ENCODE measurements at regions of chr5 and their contacts with region 1.

Region 1: GRCh38 chr5:108260117-108260857 is 121.6 kb downstream of the FBXL17 start:
- DNase-seq: peak; percentile 83
- H3K4me3 Mint-ChIP-seq: no peak overlapping the region
- H3K27ac Mint-ChIP-seq: no peak overlapping the region
- H3K4me1 Mint-ChIP-seq: no peaks in the 10 kb centered on the region
- H3K27me3 Mint-ChIP-seq: no peaks in the 10 kb centered on the region
- CTCF ChIP-seq: peak; percentile 86

Region 2: GRCh38 chr5:108122702-108123101 is 137.6 kb before region 1 on chr5:
- CTCF ChIA-PET with region 1: no interaction called
- POLR2A ChIA-PET with region 1: no interaction called
- intact Hi-C with region 1: no loop called
- DNase-seq: no peak
- H3K4me3 Mint-ChIP-seq: no peak overlapping the region
- H3K27ac Mint-ChIP-seq: no peak overlapping the region
- H3K4me1 Mint-ChIP-seq: no peaks in the 10 kb centered on the region
- H3K27me3 Mint-ChIP-seq: no peaks in the 10 kb centered on the region
- CTCF ChIP-seq: no peak

Region 3: DNA sequence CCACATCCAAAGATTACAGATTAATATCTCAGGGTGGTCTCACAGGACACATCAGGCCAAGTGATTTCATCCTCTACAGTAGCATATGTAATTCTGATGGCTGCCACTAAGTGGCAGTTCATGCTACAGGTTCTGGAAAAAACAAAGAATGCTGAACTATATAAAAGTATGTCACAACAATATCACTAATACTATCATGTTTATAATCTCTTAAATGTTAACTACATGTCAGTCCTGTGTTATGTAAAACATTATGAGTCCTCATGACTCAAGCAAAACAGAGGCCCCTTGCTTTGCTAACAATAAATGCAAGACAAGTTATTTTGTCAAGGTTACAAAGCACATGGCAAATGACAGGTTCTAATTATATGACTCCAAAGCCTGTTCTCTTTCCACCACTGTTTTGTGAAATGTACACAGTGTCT is 111.6 kb before region 1 on chr5:
- CTCF ChIA-PET with region 1: interaction called, 11 read pairs
- POLR2A ChIA-PET with region 1: no interaction called
- intact Hi-C with region 1: loop called (anchors 2 kb)
- DNase-seq: peak; percentile 32
- H3K4me3 Mint-ChIP-seq: no peak overlapping the region
- H3K27ac Mint-ChIP-seq: no peak overlapping the region
- H3K4me1 Mint-ChIP-seq: no peaks in the 10 kb centered on the region
- H3K27me3 Mint-ChIP-seq: no peaks in the 10 kb centered on the region
- CTCF ChIP-seq: peak; percentile 45

Region 4: GRCh38 chr5:108271127-108271526 is 10.8 kb after region 1 on chr5:
- CTCF ChIA-PET with region 1: interaction called, 22 read pairs
- POLR2A ChIA-PET with region 1: interaction called, 4 read pairs
- intact Hi-C with region 1: no loop called
- DNase-seq: no peak
- H3K4me3 Mint-ChIP-seq: no peak overlapping the region
- H3K27ac Mint-ChIP-seq: no peak overlapping the region
- H3K4me1 Mint-ChIP-seq: no peaks in the 10 kb centered on the region
- H3K27me3 Mint-ChIP-seq: no peaks in the 10 kb centered on the region
- CTCF ChIP-seq: no peak

Region 5: DNA sequence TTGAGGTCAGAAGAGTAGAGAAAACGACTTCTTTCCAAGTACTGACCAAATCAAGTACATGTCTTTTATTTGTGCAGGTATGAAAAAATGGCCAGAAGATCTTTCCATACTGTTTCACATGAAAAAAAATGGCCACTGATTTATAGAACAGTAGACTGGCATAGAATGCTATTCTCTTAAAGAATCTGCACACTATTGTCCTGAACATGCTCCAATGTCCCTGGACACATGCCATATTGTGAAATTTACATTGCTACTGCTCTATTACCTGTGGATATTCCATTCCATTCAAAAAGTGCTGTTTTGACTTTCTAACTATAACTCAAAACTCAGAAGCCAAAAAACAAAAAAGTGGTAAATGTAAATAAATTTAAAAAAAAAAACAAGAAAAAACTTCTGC is 61.1 kb after region 1 on chr5:
- CTCF ChIA-PET with region 1: interaction called, 22 read pairs
- POLR2A ChIA-PET with region 1: interaction called, 3 read pairs
- intact Hi-C with region 1: no loop called
- DNase-seq: peak; percentile 58
- H3K4me3 Mint-ChIP-seq: no peak overlapping the region
- H3K27ac Mint-ChIP-seq: no peak overlapping the region
- H3K4me1 Mint-ChIP-seq: peaks cover 6% of the 10 kb centered on the region
- H3K27me3 Mint-ChIP-seq: no peaks in the 10 kb centered on the region
- CTCF ChIP-seq: no peak

Region 6: DNA sequence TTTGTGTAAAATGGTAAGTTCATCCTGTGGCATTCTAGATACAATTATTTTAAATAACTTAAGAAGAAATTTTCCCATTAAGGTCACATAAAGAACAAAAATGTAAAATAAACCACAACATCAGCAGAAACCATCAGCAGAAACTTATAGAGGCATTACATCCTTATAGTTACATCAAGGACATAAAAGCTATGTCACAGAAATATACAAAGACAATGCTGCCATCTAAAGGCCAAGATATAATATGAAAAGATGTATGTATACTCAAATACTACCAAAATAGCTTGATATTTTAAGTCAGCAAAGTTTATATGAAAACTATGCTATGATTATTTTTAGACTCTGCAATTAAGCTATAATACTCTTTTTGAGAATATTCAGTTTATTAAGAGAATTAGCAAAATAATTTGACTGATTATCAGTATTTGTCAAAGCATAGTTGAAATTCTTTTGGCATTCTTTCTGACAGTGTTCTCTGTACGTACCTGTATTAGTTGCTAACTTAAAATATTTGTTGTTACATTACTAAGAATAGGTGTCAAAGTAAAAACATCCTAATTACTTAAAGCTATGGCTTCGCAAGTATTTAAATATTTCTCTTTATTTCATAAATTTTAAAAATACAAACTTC is 85.4 kb after region 1 on chr5:
- CTCF ChIA-PET with region 1: interaction called, 99 read pairs
- POLR2A ChIA-PET with region 1: interaction called, 4 read pairs
- intact Hi-C with region 1: loop called (anchors 1 kb)
- DNase-seq: peak; percentile 59
- H3K4me3 Mint-ChIP-seq: no peak overlapping the region
- H3K27ac Mint-ChIP-seq: no peak overlapping the region
- H3K4me1 Mint-ChIP-seq: no peaks in the 10 kb centered on the region
- H3K27me3 Mint-ChIP-seq: no peaks in the 10 kb centered on the region
- CTCF ChIP-seq: peak; percentile 38

Region 7: DNA sequence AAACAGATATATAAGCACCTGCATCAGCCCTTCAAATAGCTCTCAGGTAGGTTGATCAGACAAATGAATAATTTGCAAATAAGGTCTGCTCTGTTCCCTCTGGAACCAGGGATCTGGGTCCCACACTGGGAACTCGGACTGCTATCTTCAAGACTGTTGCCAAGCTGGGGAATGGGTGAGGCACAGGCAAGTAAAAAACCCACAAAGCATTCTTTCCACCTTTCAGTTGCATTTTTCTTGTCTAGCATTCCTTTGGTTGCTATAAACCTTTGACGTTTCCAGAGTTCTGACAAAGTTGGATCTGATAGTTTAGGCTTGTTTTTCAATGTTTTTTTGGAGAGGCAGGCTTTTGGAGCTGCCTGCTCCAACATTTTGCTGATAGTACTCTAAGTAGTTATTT is 101.5 kb after region 1 on chr5:
- CTCF ChIA-PET with region 1: interaction called, 10 read pairs
- POLR2A ChIA-PET with region 1: no interaction called
- intact Hi-C with region 1: no loop called
- DNase-seq: no peak
- H3K4me3 Mint-ChIP-seq: no peak overlapping the region
- H3K27ac Mint-ChIP-seq: no peak overlapping the region
- H3K4me1 Mint-ChIP-seq: no peaks in the 10 kb centered on the region
- H3K27me3 Mint-ChIP-seq: no peaks in the 10 kb centered on the region
- CTCF ChIP-seq: no peak